ENCODE measurements at regions of chr16 and their contacts with region 1.

Region 1: GRCh38 chr16:50024684-50025536 is at the start of gene CNEP1R1:
- DNase-seq: peak; percentile 94
- ATAC-seq: peak; percentile 97
- H3K4me3 Mint-ChIP-seq: peak within 1 kb of the TSS; percentile 92
- H3K27ac Mint-ChIP-seq: peak within 1 kb of the TSS; percentile 86
- H3K4me1 Mint-ChIP-seq: peaks cover 22% of the 10 kb centered on the region
- H3K27me3 Mint-ChIP-seq: no peaks in the 10 kb centered on the region
- CTCF ChIP-seq: peak; percentile 98
- total RNA-seq, gene CNEP1R1: 19.1 to 19.9 TPM

Region 2: DNA sequence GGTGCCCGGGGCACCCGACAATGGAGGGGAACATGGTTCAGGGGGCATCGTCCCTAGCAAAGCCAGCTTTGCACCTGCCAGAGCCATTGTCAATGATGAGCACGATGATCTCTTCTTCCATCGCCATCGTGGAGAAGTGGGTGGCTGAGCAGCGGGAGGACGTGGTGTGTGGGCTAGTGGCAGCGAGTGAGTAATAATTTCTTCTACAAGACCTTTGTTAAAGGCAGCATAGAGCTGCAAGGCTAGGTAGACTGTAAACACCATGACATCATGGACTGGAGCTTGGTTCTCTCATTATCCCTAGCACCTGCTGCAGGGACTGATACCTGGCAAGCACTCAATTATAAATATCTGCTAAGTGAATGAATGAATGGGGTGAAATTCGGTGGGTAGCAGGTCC is 34.2 kb after region 1 on chr16:
- CTCF ChIA-PET with region 1: interaction called, 74 read pairs
- POLR2A ChIA-PET with region 1: no interaction called
- intact Hi-C with region 1: no loop called
- DNase-seq: peak; percentile 39
- ATAC-seq: peak; percentile 62
- H3K4me3 Mint-ChIP-seq: no peak overlapping the region
- H3K27ac Mint-ChIP-seq: no peak overlapping the region
- H3K4me1 Mint-ChIP-seq: no peaks in the 10 kb centered on the region
- H3K27me3 Mint-ChIP-seq: no peaks in the 10 kb centered on the region
- CTCF ChIP-seq: no peak

Region 3: GRCh38 chr16:50121721-50122445 is 97.0 kb after region 1 on chr16:
- CTCF ChIA-PET with region 1: interaction called, 14 read pairs
- POLR2A ChIA-PET with region 1: interaction called, 4 read pairs
- intact Hi-C with region 1: no loop called
- DNase-seq: peak; percentile 73
- ATAC-seq: peak; percentile 82
- H3K4me3 Mint-ChIP-seq: peak overlapping the region; percentile 13
- H3K27ac Mint-ChIP-seq: peak overlapping the region; percentile 56
- H3K4me1 Mint-ChIP-seq: peaks cover 13% of the 10 kb centered on the region
- H3K27me3 Mint-ChIP-seq: no peaks in the 10 kb centered on the region
- CTCF ChIP-seq: no peak

Region 4: DNA sequence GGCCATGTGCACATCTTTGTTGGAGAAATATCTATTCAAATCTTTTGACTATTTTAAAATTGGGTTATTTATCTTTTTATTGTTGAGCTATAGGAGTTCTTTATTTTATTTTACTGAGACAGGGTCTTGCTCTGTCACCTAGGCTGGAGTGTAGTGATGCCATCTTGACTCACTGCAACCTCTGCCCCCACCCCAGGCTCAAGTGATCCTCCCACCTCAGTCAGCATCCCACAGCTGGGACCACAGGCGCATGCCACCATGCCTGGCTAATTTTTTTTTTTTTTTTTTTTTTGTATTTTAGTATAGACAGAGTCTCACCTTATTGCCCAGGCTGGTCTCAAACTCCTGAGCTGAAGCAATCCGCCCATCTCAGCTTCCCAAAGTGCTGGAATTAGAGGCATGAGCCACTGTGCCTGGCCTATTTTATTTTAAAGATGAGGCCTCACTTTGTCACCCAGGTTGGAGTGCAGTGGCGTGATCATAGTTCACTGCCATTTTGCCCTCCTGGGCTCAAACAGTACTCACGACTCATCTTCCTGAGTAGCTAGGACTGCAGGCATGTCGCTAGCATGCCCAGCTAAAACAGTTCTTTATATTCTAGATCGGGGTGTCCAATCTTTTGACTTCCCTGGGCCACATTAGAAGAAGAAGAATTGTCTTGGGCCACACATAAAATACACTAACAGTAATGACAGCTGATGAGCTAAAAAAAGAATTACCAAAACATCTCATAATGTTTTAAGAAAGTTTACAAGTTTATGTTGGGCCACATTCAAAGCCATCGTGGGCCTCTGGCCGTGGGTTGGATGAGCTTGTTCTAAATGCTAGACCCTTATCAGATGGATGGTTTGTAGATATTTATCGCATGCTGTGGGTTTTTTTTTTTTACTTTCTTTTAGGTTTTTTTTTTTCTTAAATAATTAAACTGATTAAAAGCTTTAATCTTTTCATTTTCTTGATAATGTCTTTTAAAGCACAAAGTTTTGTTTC is 141.9 kb after region 1 on chr16:
- CTCF ChIA-PET with region 1: interaction called, 11 read pairs
- POLR2A ChIA-PET with region 1: no interaction called
- intact Hi-C with region 1: no loop called
- DNase-seq: peak; percentile 56
- ATAC-seq: peak; percentile 82
- H3K4me3 Mint-ChIP-seq: peak overlapping the region; percentile 62
- H3K27ac Mint-ChIP-seq: peak overlapping the region; percentile 78
- H3K4me1 Mint-ChIP-seq: peaks cover 55% of the 10 kb centered on the region
- H3K27me3 Mint-ChIP-seq: no peaks in the 10 kb centered on the region
- CTCF ChIP-seq: no peak

Region 5: DNA sequence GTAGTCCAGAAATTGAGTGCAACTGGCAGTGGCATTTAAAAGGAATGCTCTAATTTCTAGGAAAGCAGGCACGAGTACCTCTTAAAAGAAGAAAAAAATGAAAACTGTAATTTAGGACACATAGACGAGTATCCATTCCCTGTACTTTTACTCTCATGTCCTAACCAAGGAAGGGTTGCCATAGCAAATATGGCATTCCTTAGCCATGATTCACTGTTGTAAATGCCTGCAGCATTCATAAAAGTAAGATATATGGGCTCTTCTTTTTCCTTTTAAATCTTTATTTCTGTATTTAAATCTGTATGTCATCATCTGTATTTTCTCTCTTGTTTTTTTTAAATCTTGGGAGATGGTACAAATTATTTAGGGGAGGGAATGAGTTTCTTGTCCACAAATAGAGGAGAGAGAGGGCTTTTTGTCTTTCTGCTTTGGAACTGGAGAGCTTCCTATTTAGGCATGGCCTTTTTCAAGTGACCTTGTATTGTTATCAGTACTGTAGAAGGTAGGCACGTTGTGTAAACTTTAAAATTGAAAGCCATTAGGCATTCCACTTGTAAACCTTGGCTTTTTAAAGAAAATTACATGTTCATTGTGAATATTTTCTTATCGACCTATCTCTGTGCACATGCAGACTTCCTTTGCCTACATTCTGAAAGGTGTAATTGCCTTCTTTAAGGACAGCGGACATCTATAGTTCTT is 178.2 kb after region 1 on chr16:
- CTCF ChIA-PET with region 1: interaction called, 110 read pairs
- POLR2A ChIA-PET with region 1: no interaction called
- intact Hi-C with region 1: no loop called
- DNase-seq: no peak
- ATAC-seq: no peak
- H3K4me3 Mint-ChIP-seq: no peak overlapping the region
- H3K27ac Mint-ChIP-seq: peak overlapping the region; percentile 18
- H3K4me1 Mint-ChIP-seq: peaks cover 59% of the 10 kb centered on the region
- H3K27me3 Mint-ChIP-seq: no peaks in the 10 kb centered on the region
- CTCF ChIP-seq: no peak

Region 6: GRCh38 chr16:50354629-50355456 is 329.9 kb after region 1 on chr16:
- CTCF ChIA-PET with region 1: interaction called, 13 read pairs
- POLR2A ChIA-PET with region 1: no interaction called
- intact Hi-C with region 1: no loop called
- DNase-seq: no peak
- ATAC-seq: no peak
- H3K4me3 Mint-ChIP-seq: no peak overlapping the region
- H3K27ac Mint-ChIP-seq: peak overlapping the region; percentile 13
- H3K4me1 Mint-ChIP-seq: peaks cover 23% of the 10 kb centered on the region
- H3K27me3 Mint-ChIP-seq: no peaks in the 10 kb centered on the region
- CTCF ChIP-seq: peak; percentile 92